Activated CD4-positive, alpha-beta memory T cell treated with anti-CD3 and anti-CD28 coated beads for 36 hours (primary cell): ENCODE measurements at regions of chr18 and their contacts with region 1.

Region 1: GRCh38 chr18:23828426-23828825 is 139.2 kb downstream of the LAMA3 start:
- DNase-seq: peak; percentile 59
- H3K4me3 Mint-ChIP-seq: no peak overlapping the region
- H3K27ac Mint-ChIP-seq: peak overlapping the region; percentile 15
- H3K4me1 Mint-ChIP-seq: peaks cover 33% of the 10 kb centered on the region
- H3K27me3 Mint-ChIP-seq: peaks cover under 1% of the 10 kb centered on the region

Region 2: GRCh38 chr18:23871410-23871809 is 43.0 kb after region 1 on chr18:
- CTCF ChIA-PET with region 1: no interaction called
- POLR2A ChIA-PET with region 1: no interaction called
- intact Hi-C with region 1: loop called (anchors 5 kb)
- DNase-seq: peak; percentile 62
- H3K4me3 Mint-ChIP-seq: no peak overlapping the region
- H3K27ac Mint-ChIP-seq: peak overlapping the region; percentile 16
- H3K4me1 Mint-ChIP-seq: peaks cover 30% of the 10 kb centered on the region
- H3K27me3 Mint-ChIP-seq: no peaks in the 10 kb centered on the region

Region 3: GRCh38 chr18:23986600-23987359 is 158.4 kb after region 1 on chr18:
- CTCF ChIA-PET with region 1: no interaction called
- POLR2A ChIA-PET with region 1: no interaction called
- intact Hi-C with region 1: loop called (anchors 1 kb)
- DNase-seq: no peak
- H3K4me3 Mint-ChIP-seq: no peak overlapping the region
- H3K27ac Mint-ChIP-seq: peak overlapping the region; percentile 5
- H3K4me1 Mint-ChIP-seq: peaks cover 66% of the 10 kb centered on the region
- H3K27me3 Mint-ChIP-seq: peaks cover 1% of the 10 kb centered on the region

Region 4: DNA sequence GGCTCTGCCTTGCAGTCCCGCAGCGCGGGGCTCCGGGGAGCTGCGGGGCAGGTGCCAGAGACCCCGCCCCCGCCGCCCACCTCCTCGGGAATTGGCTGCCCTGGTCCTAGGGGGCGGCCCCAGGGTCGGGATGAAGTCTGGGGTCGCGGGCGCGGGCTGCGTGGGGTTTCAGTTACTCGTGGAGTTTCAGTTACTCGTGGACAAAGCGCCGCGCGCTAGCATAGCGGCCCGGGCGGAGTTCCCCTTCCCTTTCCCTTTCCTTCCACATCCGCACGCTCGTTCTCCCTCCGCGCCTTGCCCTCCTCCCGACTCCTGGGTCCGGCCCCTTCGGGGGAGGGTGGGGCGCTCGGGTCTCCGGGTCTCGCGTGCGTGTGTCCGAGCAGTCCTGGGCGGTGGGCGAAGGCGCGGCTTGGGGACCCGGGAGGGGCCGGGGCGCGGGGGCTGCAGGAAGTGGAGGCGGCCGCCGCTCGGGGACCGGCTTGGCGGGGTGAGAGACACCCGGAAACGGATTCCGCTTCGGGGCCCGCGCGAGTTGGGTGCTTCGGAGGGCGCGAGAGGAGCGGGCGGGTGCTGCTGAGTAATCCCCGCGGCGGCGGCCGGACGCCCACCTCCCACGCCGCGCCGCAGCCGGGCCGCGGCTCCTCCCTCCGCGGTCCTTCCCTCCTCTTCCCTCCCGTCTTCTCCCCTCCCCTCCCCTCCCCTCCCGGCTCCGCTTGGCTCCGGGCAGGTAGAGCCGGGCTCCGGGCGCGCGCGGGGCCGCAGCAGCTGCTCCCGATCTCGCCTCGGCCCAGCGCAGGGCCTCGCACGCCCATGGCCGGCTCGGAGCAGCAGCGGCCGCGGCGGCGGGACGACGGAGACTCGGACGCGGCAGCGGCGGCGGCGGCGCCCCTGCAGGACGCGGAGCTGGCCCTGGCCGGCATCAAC is 185.9 kb after region 1 on chr18 and contains the start of gene TTC39C:
- CTCF ChIA-PET with region 1: no interaction called
- POLR2A ChIA-PET with region 1: no interaction called
- intact Hi-C with region 1: loop called (anchors 5 kb)
- DNase-seq: peak; percentile 93
- H3K4me3 Mint-ChIP-seq: peak within 1 kb of the TSS; percentile 89
- H3K27ac Mint-ChIP-seq: peak within 1 kb of the TSS; percentile 89
- H3K4me1 Mint-ChIP-seq: peaks cover 71% of the 10 kb centered on the region
- H3K27me3 Mint-ChIP-seq: no peaks in the 10 kb centered on the region
- total RNA-seq, gene TTC39C: 48.9 to 49.0 TPM

Region 5: DNA sequence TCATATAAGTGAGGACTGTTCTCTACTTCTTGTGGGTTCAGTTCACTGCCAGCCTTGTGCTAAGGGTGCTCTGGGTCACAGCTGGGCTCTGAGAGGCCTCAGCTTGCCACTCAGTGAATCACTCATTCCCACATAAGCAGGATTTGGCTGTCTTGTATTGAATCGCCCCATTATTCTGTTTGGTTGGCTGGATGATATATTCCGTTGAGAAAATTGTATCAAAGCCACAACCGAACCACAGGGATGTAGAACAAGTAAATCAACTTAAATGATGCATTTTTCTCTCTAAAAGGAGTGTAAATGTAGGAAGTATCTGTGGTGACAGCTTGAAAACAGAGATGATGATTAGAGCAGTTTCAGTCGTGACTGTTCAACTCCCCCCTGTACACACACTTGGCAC is 225.7 kb after region 1 on chr18:
- CTCF ChIA-PET with region 1: no interaction called
- POLR2A ChIA-PET with region 1: no interaction called
- intact Hi-C with region 1: loop called (anchors 2 kb)
- DNase-seq: peak; percentile 60
- H3K4me3 Mint-ChIP-seq: no peak overlapping the region
- H3K27ac Mint-ChIP-seq: peak overlapping the region; percentile 20
- H3K4me1 Mint-ChIP-seq: peaks cover 80% of the 10 kb centered on the region
- H3K27me3 Mint-ChIP-seq: no peaks in the 10 kb centered on the region

Region 6: GRCh38 chr18:24118750-24119577 is 290.5 kb after region 1 on chr18:
- CTCF ChIA-PET with region 1: no interaction called
- POLR2A ChIA-PET with region 1: no interaction called
- intact Hi-C with region 1: loop called (anchors 5 kb)
- DNase-seq: peak; percentile 85
- H3K4me3 Mint-ChIP-seq: no peak overlapping the region
- H3K27ac Mint-ChIP-seq: peak overlapping the region; percentile 49
- H3K4me1 Mint-ChIP-seq: peaks cover 26% of the 10 kb centered on the region
- H3K27me3 Mint-ChIP-seq: no peaks in the 10 kb centered on the region

Region 7: DNA sequence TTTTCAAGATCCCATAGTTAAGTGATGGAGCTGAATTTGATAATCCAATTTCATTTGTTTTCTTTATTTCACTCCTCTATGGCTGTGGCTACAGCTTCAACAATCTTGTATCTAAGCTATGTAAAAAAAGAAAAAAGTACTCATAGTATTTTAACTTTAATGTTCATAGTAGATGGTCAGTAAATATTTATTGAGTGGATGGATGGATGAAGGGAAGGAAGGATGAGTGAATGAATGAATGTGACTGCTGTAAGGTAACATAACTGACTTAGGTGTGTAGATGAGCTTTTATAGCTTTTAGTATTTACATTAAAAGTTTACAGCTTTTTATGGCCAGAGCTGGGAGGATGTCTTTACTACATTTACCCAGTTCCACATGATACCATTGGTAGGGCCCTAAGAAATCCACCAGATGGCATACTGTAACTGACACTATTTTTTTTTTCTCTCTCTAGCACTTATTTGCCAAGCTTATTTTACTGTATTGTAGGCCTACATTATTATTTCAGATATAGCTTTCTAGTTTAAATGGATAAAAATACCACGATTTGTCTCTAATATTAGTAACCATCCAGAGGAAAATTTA is 618.6 kb after region 1 on chr18:
- CTCF ChIA-PET with region 1: no interaction called
- POLR2A ChIA-PET with region 1: no interaction called
- intact Hi-C with region 1: no loop called
- DNase-seq: no peak
- H3K4me3 Mint-ChIP-seq: no peak overlapping the region
- H3K27ac Mint-ChIP-seq: no peak overlapping the region
- H3K4me1 Mint-ChIP-seq: peaks cover 4% of the 10 kb centered on the region
- H3K27me3 Mint-ChIP-seq: no peaks in the 10 kb centered on the region